Heart right ventricle (tissue), 16 donors: ENCODE measurements at regions of chr18 and their contacts with region 1.

Region 1: DNA sequence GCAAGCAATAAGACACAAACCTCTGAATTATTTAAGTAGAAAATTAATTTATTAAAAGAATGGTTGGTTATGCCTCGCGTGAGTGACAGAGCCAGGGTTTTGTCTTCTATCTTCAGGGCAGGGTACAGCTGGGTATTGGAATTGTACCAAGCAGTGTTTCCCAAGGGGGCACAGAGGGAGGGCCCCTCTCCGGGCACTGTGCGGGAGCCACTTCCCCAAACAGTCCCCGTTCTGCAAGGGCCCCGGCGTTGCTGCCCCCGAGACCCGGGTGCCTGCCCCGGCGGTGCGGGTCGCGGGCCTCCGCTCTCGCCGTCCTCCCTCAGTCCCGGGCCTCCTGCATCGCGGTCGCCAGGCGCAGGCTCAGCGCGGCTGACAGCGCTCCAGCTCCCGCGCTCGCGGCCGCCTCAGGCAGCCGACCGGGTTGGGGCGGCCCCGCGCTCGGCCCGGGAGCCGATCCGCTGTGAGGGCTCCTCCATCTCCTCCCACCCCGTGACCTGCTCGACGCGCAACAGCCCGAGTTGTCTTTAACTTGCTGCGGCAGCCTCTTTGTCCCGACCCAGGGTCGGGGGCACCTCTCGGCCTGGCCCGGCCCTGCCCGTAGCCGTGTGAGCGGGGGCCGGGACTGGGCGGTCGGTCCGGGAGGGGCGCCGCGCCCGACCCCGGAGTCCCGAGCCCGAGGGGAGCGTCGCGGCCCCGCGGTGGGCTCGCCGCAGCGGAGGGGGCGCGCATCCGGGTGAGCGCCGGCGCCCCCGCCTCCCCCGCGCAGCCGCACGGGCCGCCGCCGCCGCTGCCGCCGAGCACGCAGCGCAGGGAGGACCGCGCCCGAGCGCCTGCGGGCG is 620 bp upstream of the GALNT1 start:
- DNase-seq: peak; percentile 51 to 69
- ATAC-seq: peak; percentile 78 to 89 (median 84)
- H3K4me3 ChIP-seq: peak overlapping the region; percentile 15 to 86 (median 80)
- H3K27ac ChIP-seq: peak overlapping the region; percentile 86 to 99 (median 96)
- H3K4me1 ChIP-seq: peaks cover 0 to 30% (median 24%) of the 10 kb centered on the region in 9 donors
- H3K27me3 ChIP-seq: no peaks in the 10 kb centered on the region
- CTCF ChIP-seq: no peak

Region 2: GRCh38 chr18:35407871-35408481 is 172.9 kb before region 1 on chr18:
- intact Hi-C with region 1: loop called in 7 of 10 experiments (anchors 5 to 10 kb)
- DNase-seq: peak in 1 of 2 donors; percentile 68
- ATAC-seq: peak; percentile 71 to 92 (median 79)
- H3K4me3 ChIP-seq: no peak overlapping the region
- H3K27ac ChIP-seq: no peak overlapping the region
- H3K4me1 ChIP-seq: peaks cover 0 to 16% (median 0%) of the 10 kb centered on the region in 9 donors
- H3K27me3 ChIP-seq: no peaks in the 10 kb centered on the region
- CTCF ChIP-seq: peak; percentile 47 to 88 (median 85)

Region 3: GRCh38 chr18:35470435-35470834 is 110.5 kb before region 1 on chr18:
- intact Hi-C with region 1: no loop called
- DNase-seq: no peak
- ATAC-seq: no peak
- H3K4me3 ChIP-seq: no peak overlapping the region
- H3K27ac ChIP-seq: no peak overlapping the region
- H3K4me1 ChIP-seq: peaks cover 0 to 29% (median 9%) of the 10 kb centered on the region in 9 donors
- H3K27me3 ChIP-seq: no peaks in the 10 kb centered on the region
- CTCF ChIP-seq: no peak

Region 4: DNA sequence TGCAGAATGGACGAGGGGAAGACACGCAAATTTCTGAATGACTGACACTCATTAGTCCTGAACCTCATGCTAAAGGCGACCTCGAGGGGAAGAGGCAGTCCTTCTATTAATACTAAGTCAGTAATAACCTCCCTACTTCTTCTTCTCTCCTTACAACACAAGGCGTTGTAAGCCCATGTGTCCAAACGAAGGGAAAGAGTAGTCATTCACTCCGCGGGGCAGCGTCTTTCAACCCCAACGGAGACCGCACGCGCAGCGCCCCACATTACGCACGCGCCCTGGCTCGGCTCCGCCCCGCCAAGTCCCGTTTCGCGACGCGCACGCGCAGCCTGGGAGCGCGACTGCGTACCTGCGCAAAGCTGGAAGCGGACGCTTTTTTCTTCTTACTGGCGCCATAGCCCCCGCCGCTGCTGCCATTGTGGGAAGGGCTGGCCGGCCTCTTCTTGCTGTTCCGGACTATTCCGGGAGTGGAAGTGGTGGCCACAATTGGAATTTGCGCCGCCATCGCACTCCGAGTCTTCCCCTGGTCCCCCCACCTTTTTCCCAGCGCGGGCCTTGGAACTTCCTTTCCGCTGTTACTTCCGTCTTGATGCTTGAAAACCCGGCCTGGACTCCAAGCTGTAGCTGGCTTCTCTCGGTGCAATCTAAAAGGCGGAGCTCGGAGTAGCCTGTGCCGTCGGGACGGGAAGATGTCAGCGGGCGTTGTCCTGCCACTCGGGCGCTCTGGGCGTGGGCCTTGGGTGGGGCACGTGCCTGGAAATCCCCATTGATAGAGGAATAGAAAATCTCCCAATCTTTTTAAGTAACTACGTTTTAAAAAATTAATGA is 83.3 kb before region 1 on chr18 and contains the start of gene INO80C:
- intact Hi-C with region 1: loop called in 4 of 10 experiments (anchors 1 to 5 kb)
- DNase-seq: peak; percentile 93 to 94
- ATAC-seq: peak; percentile 98 to 99 (median 99)
- H3K4me3 ChIP-seq: peak within 1 kb of the TSS; percentile 4 to 69 (median 64)
- H3K27ac ChIP-seq: peak within 1 kb of the TSS; percentile 88 to 97 (median 95)
- H3K4me1 ChIP-seq: peaks cover 0 to 30% (median 18%) of the 10 kb centered on the region in 9 donors
- H3K27me3 ChIP-seq: no peaks in the 10 kb centered on the region
- CTCF ChIP-seq: no peak
- total RNA-seq, gene INO80C: 19.5 to 28.4 (median 25.5) TPM

Region 5: DNA sequence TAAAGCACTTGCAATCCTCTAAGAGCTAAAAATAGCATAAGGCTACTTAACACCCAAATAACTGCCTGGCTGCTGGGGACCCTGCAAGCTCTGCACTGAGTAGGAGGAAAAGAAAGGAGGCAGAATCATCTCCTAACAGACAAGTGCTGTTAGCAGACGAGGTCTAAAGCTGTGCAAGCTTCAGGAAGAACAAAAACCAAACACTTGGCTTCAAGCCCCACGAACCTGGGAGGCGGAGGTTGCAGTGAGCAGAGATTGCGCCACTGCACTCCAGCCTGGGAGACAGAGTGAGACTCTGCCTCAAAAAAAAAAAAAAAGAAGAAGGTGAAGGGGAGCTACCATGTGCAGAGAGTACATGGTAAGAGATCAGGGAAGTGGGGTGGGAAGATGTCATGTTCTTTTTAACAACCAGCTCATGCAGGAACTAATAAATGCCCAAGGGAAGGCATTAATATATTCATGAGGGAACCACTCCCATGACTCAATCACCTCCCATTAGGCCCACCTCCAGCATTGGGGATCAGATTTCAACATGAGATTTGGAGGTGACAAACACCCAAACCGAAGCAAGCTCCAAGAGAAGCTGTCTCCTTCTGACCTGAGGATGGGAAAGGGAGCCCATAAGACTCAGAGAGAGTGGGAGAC is 54.3 kb before region 1 on chr18:
- intact Hi-C with region 1: loop called in 4 of 10 experiments (anchors 5 to 10 kb)
- DNase-seq: no peak
- ATAC-seq: peak; percentile 17 to 65 (median 52)
- H3K4me3 ChIP-seq: peak overlapping the region in 5 of 10 donors; percentile 1 to 27 (median 16)
- H3K27ac ChIP-seq: peak overlapping the region in 6 of 10 donors; percentile 16 to 64 (median 24)
- H3K4me1 ChIP-seq: peaks cover 7 to 47% (median 24%) of the 10 kb centered on the region in 9 donors
- H3K27me3 ChIP-seq: no peaks in the 10 kb centered on the region
- CTCF ChIP-seq: no peak

Region 6: GRCh38 chr18:35624146-35624545 is 43.2 kb after region 1 on chr18:
- intact Hi-C with region 1: loop called in 2 of 10 experiments (anchors 5 kb)
- DNase-seq: no peak
- ATAC-seq: no peak
- H3K4me3 ChIP-seq: no peak overlapping the region
- H3K27ac ChIP-seq: no peak overlapping the region
- H3K4me1 ChIP-seq: peaks cover 0 to 51% (median 29%) of the 10 kb centered on the region in 9 donors
- H3K27me3 ChIP-seq: no peaks in the 10 kb centered on the region
- CTCF ChIP-seq: no peak

Region 7: GRCh38 chr18:36673452-36673851 is 1092.5 kb after region 1 on chr18:
- intact Hi-C with region 1: no loop called
- DNase-seq: no peak
- ATAC-seq: no peak
- H3K4me3 ChIP-seq: no peak overlapping the region
- H3K27ac ChIP-seq: peak overlapping the region in 1 of 10 donors; percentile 24
- H3K4me1 ChIP-seq: peaks cover 0 to 10% (median 0%) of the 10 kb centered on the region in 9 donors
- H3K27me3 ChIP-seq: no peaks in the 10 kb centered on the region
- CTCF ChIP-seq: no peak